ENCODE measurements at regions of chr6 and their contacts with region 1.

Region 1: DNA sequence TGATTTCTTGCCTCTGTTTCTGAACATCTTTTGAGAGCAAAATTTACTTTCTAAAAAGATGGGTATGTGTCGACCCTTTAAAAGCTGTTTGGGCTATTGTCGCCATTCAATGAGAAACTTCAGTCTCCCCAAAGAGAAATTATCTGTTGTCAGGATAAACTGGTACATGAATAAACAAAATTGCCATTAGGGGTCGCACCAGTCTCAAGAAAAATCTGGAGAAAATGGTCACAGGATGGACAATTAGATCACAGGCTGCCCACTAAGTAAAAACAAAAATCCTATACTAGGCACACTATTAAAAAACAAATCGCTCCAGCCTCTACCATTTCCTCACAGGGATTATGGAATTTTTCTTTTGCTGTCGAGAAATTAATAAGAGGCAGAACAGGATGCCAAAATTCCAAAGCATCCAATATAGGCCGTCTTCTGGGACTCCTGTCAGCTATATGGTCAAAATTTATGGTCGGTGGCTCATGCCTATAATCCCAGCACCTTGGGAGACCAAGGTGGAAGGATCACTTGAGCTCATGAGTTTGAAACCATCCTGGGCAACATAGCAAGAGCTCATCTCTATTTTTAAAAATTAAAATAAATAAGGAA is 5.5 kb upstream of the HLA-E start:
- DNase-seq: peak; percentile 74
- ATAC-seq: peak; percentile 42
- H3K4me3 ChIP-seq: no peak overlapping the region
- H3K27ac ChIP-seq: no peak overlapping the region
- H3K4me1 ChIP-seq: no peaks in the 10 kb centered on the region
- H3K27me3 ChIP-seq: peaks cover 27% of the 10 kb centered on the region
- CTCF ChIP-seq: peak; percentile 81
- POLR2A ChIP-seq: no peak
- RAD21 ChIP-seq: peak; percentile 75

Region 2: GRCh38 chr6:30037182-30037788 is 446.5 kb before region 1 on chr6:
- CTCF ChIA-PET with region 1: no interaction called
- POLR2A ChIA-PET with region 1: no interaction called
- dilution Hi-C with region 1: no loop called
- in situ Hi-C with region 1: no loop called
- intact Hi-C with region 1: no loop called
- DNase-seq: peak; percentile 17
- ATAC-seq: peak; percentile 74; the same call in 1 of the 2 replicates
- H3K4me3 ChIP-seq: no peak overlapping the region
- H3K27ac ChIP-seq: no peak overlapping the region
- H3K4me1 ChIP-seq: no peaks in the 10 kb centered on the region; the same call in 1 of the 2 replicates
- H3K27me3 ChIP-seq: no peaks in the 10 kb centered on the region
- CTCF ChIP-seq: peak; percentile 42
- POLR2A ChIP-seq: no peak
- RAD21 ChIP-seq: 0 out of 2 replicates have a peak, but pooled peaks have one; percentile 6

Region 3: GRCh38 chr6:30326526-30327260 is 157.1 kb before region 1 on chr6 and contains the start of gene TRIM39:
- CTCF ChIA-PET with region 1: no interaction called
- POLR2A ChIA-PET with region 1: no interaction called
- dilution Hi-C with region 1: no loop called
- in situ Hi-C with region 1: no loop called
- intact Hi-C with region 1: no loop called
- DNase-seq: peak; percentile 84
- ATAC-seq: peak; percentile 79
- H3K4me3 ChIP-seq: peak within 1 kb of the TSS; percentile 96
- H3K27ac ChIP-seq: peak within 1 kb of the TSS; percentile 96
- H3K4me1 ChIP-seq: peaks cover 5% of the 10 kb centered on the region; the same call in 1 of the 2 replicates
- H3K27me3 ChIP-seq: no peaks in the 10 kb centered on the region
- CTCF ChIP-seq: no peak
- POLR2A ChIP-seq: peak; percentile 83
- RAD21 ChIP-seq: no peak
- total RNA-seq, gene TRIM39: 9.4 and 10.0 TPM in 2 replicates

Region 4: GRCh38 chr6:30399390-30400058 is 84.3 kb before region 1 on chr6:
- CTCF ChIA-PET with region 1: no interaction called
- POLR2A ChIA-PET with region 1: no interaction called
- dilution Hi-C with region 1: no loop called
- in situ Hi-C with region 1: no loop called
- intact Hi-C with region 1: no loop called
- DNase-seq: peak; percentile 25
- ATAC-seq: no peak
- H3K4me3 ChIP-seq: no peak overlapping the region
- H3K27ac ChIP-seq: no peak overlapping the region
- H3K4me1 ChIP-seq: no peaks in the 10 kb centered on the region
- H3K27me3 ChIP-seq: peaks cover 21% of the 10 kb centered on the region
- CTCF ChIP-seq: no peak
- POLR2A ChIP-seq: no peak
- RAD21 ChIP-seq: no peak

Region 5: GRCh38 chr6:30533460-30534294 is 49.9 kb after region 1 on chr6:
- CTCF ChIA-PET with region 1: interaction called, 33 read pairs
- POLR2A ChIA-PET with region 1: no interaction called
- dilution Hi-C with region 1: no loop called
- in situ Hi-C with region 1: no loop called
- intact Hi-C with region 1: loop called (anchors 1 kb)
- DNase-seq: no peak
- ATAC-seq: no peak
- H3K4me3 ChIP-seq: no peak overlapping the region
- H3K27ac ChIP-seq: no peak overlapping the region
- H3K4me1 ChIP-seq: no peaks in the 10 kb centered on the region; the same call in 1 of the 2 replicates
- H3K27me3 ChIP-seq: no peaks in the 10 kb centered on the region
- CTCF ChIP-seq: no peak
- POLR2A ChIP-seq: no peak
- RAD21 ChIP-seq: no peak

Region 6: DNA sequence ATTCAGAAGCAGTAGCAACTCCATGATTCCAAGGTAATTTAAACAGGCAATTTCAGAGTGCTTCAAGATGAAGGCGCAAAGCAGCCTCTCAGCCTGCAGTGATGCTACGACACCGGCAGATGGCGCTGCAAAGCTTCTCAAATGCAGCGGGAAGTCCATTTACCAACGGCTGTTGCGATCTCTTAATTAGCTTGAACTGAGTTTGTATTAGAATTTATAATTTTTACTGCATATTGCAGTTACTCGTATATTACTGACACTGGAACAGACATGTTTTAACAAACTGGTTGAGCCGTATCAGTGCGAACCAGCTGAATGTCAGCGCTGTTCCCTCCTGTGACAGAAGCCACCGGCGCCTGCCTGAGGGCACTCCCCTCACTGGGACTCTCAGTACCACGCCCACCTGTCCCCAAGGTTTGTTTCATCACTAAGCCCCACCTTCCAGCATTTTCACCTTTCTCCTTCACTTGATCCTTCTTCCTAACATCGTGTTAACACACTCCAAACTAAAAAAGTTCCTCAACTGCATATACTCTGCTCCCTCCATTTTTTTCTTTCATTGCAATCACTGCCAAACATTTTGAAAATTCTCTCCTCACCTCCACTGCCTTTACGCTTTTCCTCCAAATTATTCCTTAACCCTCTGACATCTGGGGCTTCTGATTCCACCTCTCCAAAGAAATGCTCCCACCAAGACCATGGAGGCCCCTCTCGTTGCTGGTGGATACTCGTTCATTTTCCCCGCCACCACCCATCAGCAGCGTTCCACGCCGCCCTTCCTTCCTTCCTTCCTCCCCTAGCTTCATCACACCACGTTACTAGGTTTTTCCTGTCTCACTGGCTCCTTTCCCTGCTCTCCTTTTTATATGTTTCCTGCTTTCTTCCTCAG is 58.0 kb after region 1 on chr6:
- CTCF ChIA-PET with region 1: interaction called, 33 read pairs
- POLR2A ChIA-PET with region 1: no interaction called
- dilution Hi-C with region 1: no loop called
- in situ Hi-C with region 1: no loop called
- intact Hi-C with region 1: loop called (anchors 1 kb)
- DNase-seq: peak; percentile 87
- ATAC-seq: peak; percentile 85
- H3K4me3 ChIP-seq: no peak overlapping the region; the same call in 1 of the 2 replicates
- H3K27ac ChIP-seq: no peak overlapping the region
- H3K4me1 ChIP-seq: no peaks in the 10 kb centered on the region
- H3K27me3 ChIP-seq: no peaks in the 10 kb centered on the region
- CTCF ChIP-seq: peak; percentile 91
- POLR2A ChIP-seq: no peak
- RAD21 ChIP-seq: peak; percentile 69

Region 7: DNA sequence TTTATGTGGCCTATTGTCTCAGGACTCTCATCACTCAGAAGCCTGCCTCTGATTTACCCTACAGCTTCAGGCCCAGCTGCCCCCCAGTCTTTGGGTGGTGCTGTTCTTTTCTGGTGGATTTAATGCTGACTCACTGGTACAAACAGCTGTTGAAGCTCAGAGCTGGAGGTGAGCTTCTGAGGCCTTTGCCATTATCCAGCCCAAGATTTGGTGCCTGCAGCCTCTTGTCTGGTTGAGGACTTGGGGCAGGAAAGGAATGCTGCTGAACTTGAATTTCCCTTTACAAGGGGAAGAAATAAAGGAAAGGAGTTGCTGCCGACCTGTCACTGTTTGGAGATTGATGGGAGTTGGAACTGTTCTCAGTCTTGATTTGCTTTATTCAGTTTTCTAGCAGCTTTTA is 107.2 kb after region 1 on chr6:
- CTCF ChIA-PET with region 1: no interaction called
- POLR2A ChIA-PET with region 1: no interaction called
- dilution Hi-C with region 1: no loop called
- in situ Hi-C with region 1: no loop called
- intact Hi-C with region 1: loop called (anchors 2 kb)
- DNase-seq: peak; percentile 72
- ATAC-seq: peak; percentile 91
- H3K4me3 ChIP-seq: no peak overlapping the region
- H3K27ac ChIP-seq: peak overlapping the region; percentile 85; the same call in 1 of the 2 replicates
- H3K4me1 ChIP-seq: peaks cover 7% of the 10 kb centered on the region
- H3K27me3 ChIP-seq: no peaks in the 10 kb centered on the region
- CTCF ChIP-seq: no peak
- POLR2A ChIP-seq: no peak
- RAD21 ChIP-seq: no peak

Region 8: GRCh38 chr6:30672445-30673253 is 188.9 kb after region 1 on chr6 and contains the start of gene DHX16:
- CTCF ChIA-PET with region 1: no interaction called
- POLR2A ChIA-PET with region 1: no interaction called
- dilution Hi-C with region 1: no loop called
- in situ Hi-C with region 1: no loop called
- intact Hi-C with region 1: loop called (anchors 2 kb)
- DNase-seq: peak; percentile 98
- ATAC-seq: peak; percentile 88
- H3K4me3 ChIP-seq: peak within 1 kb of the TSS; percentile 77
- H3K27ac ChIP-seq: peak within 1 kb of the TSS; percentile 58
- H3K4me1 ChIP-seq: peaks cover 3% of the 10 kb centered on the region; the same call in 1 of the 2 replicates
- H3K27me3 ChIP-seq: no peaks in the 10 kb centered on the region
- CTCF ChIP-seq: peak; percentile 94
- POLR2A ChIP-seq: 0 out of 2 replicates have a peak, but pooled peaks have one; percentile 31
- RAD21 ChIP-seq: peak; percentile 56
- total RNA-seq, gene DHX16: 43.9 and 48.4 TPM in 2 replicates

Region 9: GRCh38 chr6:31225735-31226134 is 742.0 kb after region 1 on chr6:
- CTCF ChIA-PET with region 1: no interaction called
- POLR2A ChIA-PET with region 1: no interaction called
- dilution Hi-C with region 1: no loop called
- in situ Hi-C with region 1: no loop called
- intact Hi-C with region 1: no loop called
- DNase-seq: no peak
- ATAC-seq: no peak
- H3K4me3 ChIP-seq: no peak overlapping the region
- H3K27ac ChIP-seq: no peak overlapping the region
- H3K4me1 ChIP-seq: no peaks in the 10 kb centered on the region
- H3K27me3 ChIP-seq: peaks cover 21% of the 10 kb centered on the region
- CTCF ChIP-seq: no peak
- POLR2A ChIP-seq: no peak
- RAD21 ChIP-seq: no peak